CD8-positive, alpha-beta T cell (primary cell): ENCODE measurements at regions of chr7 and their contacts with region 1.

Region 1: DNA sequence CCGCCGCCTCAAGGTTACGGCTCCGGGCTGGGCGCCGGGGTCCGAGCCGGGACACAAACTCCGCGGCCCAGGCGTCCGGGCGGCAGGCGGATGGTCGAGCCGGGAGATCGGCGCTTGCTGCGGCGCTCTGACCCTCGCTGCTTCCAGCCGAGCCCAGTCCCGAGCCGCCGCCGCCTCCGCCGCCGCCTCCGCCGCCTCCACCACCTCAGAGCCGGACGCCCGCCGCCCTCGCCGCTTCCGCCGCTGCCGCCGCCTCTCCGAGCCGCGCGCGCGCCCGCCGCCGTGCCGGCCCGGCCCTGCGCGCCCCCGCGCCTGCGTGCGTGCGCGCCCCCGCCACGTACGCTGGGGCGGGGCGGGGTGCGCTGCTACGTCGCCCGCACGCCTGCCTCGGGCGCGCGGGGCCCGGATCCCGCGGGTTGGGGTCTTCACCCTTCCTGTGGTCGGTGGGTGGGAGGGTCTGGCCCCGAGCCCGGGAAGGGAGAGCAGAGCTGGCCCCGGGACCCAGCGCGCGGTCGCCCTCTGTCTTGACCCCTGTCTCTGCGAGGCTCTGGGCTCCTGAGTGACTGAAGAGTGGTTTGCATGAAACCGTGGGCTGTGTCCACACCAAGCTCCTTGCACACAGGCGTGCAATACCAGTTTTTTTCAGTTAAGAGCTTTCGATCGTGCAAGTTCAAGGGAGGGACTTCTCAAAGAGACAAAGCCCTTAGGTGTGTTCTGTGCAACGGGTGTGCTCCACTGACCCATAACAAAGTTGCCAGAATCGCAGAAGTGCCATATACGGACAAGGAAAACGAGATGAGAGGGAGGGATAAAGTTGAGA is at the start of gene SMURF1:
- DNase-seq: peak; percentile 41 to 89 (median 71)
- ATAC-seq: peak; percentile 37
- H3K4me3 ChIP-seq: peak within 1 kb of the TSS; percentile 66 to 85
- H3K4me3 Mint-ChIP-seq: peak within 1 kb of the TSS; percentile 93
- H3K27ac ChIP-seq: peak within 1 kb of the TSS; percentile 60 to 74
- H3K27ac Mint-ChIP-seq: peak within 1 kb of the TSS; percentile 89
- H3K4me1 ChIP-seq: peaks cover 33% of the 10 kb centered on the region
- H3K4me1 Mint-ChIP-seq: peaks cover 31% of the 10 kb centered on the region
- H3K27me3 ChIP-seq: no peaks in the 10 kb centered on the region
- H3K27me3 Mint-ChIP-seq: no peaks in the 10 kb centered on the region
- CTCF ChIP-seq: no peak
- total RNA-seq, gene SMURF1: 42.5 to 44.8 TPM

Region 2: DNA sequence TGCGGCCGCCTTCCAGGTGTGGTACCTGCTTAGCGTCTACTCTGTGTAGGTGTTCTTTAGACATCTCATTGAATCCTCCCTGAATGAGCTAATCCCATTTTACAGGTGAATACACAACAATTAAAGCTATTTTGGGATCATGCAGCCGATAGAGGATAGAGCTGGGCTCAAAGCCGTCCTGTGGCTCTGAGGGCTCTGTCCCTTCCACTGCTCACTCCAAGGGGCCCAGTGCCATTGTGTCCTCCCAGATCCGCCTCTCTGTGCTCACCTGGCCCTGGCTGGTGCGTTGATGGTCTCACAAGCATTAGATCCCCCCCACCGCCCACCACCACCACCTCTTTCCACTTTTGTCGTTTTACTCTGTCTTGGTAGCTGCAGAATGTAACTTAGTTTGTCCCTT is 513.9 kb before region 1 on chr7:
- CTCF ChIA-PET with region 1: no interaction called
- POLR2A ChIA-PET with region 1: no interaction called
- intact Hi-C with region 1: no loop called
- DNase-seq: no peak
- ATAC-seq: no peak
- H3K4me3 ChIP-seq: no peak overlapping the region
- H3K4me3 Mint-ChIP-seq: no peak overlapping the region
- H3K27ac ChIP-seq: no peak overlapping the region
- H3K27ac Mint-ChIP-seq: no peak overlapping the region
- H3K4me1 ChIP-seq: no peaks in the 10 kb centered on the region
- H3K4me1 Mint-ChIP-seq: peaks cover 2% of the 10 kb centered on the region
- H3K27me3 ChIP-seq: no peaks in the 10 kb centered on the region
- H3K27me3 Mint-ChIP-seq: peaks cover 11% of the 10 kb centered on the region
- CTCF ChIP-seq: no peak

Region 3: DNA sequence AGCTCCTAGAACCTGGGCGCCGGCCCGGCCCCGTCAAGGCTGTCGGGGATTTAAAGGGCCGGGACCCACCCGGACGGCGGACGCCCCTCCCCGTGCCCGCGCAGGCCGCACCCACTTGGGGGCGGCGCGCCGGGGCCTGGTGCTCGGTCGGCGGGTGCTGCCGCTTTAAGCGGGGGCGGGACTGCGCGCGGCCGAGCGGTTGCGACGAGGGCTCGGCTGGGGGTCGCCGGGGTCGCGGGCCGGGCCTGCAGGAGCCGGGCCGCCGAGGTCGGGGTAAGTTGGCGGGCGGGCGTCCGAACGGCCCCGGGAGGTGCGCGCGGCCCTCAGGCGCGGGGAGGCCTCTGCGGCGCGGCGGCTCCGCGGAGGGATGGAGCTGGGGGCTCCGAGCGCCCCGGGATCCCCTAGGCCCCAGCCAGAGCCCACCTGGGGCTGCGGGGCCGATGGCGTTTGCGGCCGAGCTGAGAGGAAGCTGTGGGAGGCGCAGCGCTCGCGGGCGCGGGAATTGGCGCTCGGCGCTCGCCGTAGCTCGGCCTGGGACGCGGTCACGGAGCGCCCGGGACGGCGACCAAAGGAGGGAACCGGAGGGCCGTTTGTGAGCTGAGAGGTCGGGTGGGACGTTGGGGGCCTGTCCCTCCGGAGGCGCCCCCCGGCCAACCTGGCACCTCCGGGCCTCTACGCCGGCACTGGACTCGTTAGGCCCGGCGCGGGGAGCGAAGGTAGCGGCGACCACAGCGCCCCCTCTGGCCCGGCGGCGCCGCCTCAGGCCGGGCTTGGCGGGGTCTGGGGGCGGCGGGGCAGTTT is 265.5 kb before region 1 on chr7 and contains the start of gene TRRAP:
- CTCF ChIA-PET with region 1: no interaction called
- POLR2A ChIA-PET with region 1: no interaction called
- intact Hi-C with region 1: loop called (anchors 2 kb)
- DNase-seq: peak; percentile 56 to 87 (median 73)
- ATAC-seq: peak; percentile 63
- H3K4me3 ChIP-seq: peak within 1 kb of the TSS; percentile 82 to 92
- H3K4me3 Mint-ChIP-seq: peak within 1 kb of the TSS; percentile 98
- H3K27ac ChIP-seq: peak within 1 kb of the TSS; percentile 77 to 82
- H3K27ac Mint-ChIP-seq: peak within 1 kb of the TSS; percentile 96
- H3K4me1 ChIP-seq: peaks cover 16% of the 10 kb centered on the region
- H3K4me1 Mint-ChIP-seq: peaks cover 24% of the 10 kb centered on the region
- H3K27me3 ChIP-seq: no peaks in the 10 kb centered on the region
- H3K27me3 Mint-ChIP-seq: peaks cover 2% of the 10 kb centered on the region
- CTCF ChIP-seq: peak; percentile 94
- total RNA-seq, gene TRRAP: 39.8 to 43.0 TPM

Region 4: GRCh38 chr7:98988641-98989040 is 155.4 kb before region 1 on chr7:
- CTCF ChIA-PET with region 1: no interaction called
- POLR2A ChIA-PET with region 1: no interaction called
- intact Hi-C with region 1: loop called in 1 of 2 experiments (anchors 5 kb)
- DNase-seq: no peak
- ATAC-seq: no peak
- H3K4me3 ChIP-seq: peak overlapping the region in 1 of 2 experiments; percentile 14
- H3K4me3 Mint-ChIP-seq: peak overlapping the region; percentile 40
- H3K27ac ChIP-seq: peak overlapping the region; percentile 30 to 43
- H3K27ac Mint-ChIP-seq: peak overlapping the region; percentile 91
- H3K4me1 ChIP-seq: peaks cover 26% of the 10 kb centered on the region
- H3K4me1 Mint-ChIP-seq: peaks cover 33% of the 10 kb centered on the region
- H3K27me3 ChIP-seq: no peaks in the 10 kb centered on the region
- H3K27me3 Mint-ChIP-seq: no peaks in the 10 kb centered on the region
- CTCF ChIP-seq: no peak

Region 5: GRCh38 chr7:99325545-99326407 is 181.7 kb after region 1 on chr7 and contains the start of gene ARPC1A:
- CTCF ChIA-PET with region 1: no interaction called
- POLR2A ChIA-PET with region 1: no interaction called
- intact Hi-C with region 1: loop called (anchors 1 to 2 kb)
- DNase-seq: peak; percentile 88 to 96 (median 92)
- ATAC-seq: peak; percentile 92
- H3K4me3 ChIP-seq: peak within 1 kb of the TSS; percentile 97 to 100
- H3K4me3 Mint-ChIP-seq: peak within 1 kb of the TSS; percentile 89
- H3K27ac ChIP-seq: peak within 1 kb of the TSS; percentile 79 to 87
- H3K27ac Mint-ChIP-seq: peak within 1 kb of the TSS; percentile 94
- H3K4me1 ChIP-seq: peaks cover 45% of the 10 kb centered on the region
- H3K4me1 Mint-ChIP-seq: peaks cover 43% of the 10 kb centered on the region
- H3K27me3 ChIP-seq: no peaks in the 10 kb centered on the region
- H3K27me3 Mint-ChIP-seq: no peaks in the 10 kb centered on the region
- CTCF ChIP-seq: no peak
- total RNA-seq, gene ARPC1A: 33.1 to 38.2 TPM

Region 6: GRCh38 chr7:99374103-99375064 is 230.3 kb after region 1 on chr7 and contains the start of gene ARPC1B:
- CTCF ChIA-PET with region 1: no interaction called
- POLR2A ChIA-PET with region 1: no interaction called
- intact Hi-C with region 1: loop called in 1 of 2 experiments (anchors 5 kb)
- DNase-seq: peak; percentile 69 to 94 (median 86)
- ATAC-seq: peak; percentile 55
- H3K4me3 ChIP-seq: peak within 1 kb of the TSS; percentile 70 to 90
- H3K4me3 Mint-ChIP-seq: peak within 1 kb of the TSS; percentile 84
- H3K27ac ChIP-seq: peak within 1 kb of the TSS; percentile 84 to 91
- H3K27ac Mint-ChIP-seq: peak within 1 kb of the TSS; percentile 96
- H3K4me1 ChIP-seq: peaks cover 55% of the 10 kb centered on the region
- H3K4me1 Mint-ChIP-seq: peaks cover 36% of the 10 kb centered on the region
- H3K27me3 ChIP-seq: no peaks in the 10 kb centered on the region
- H3K27me3 Mint-ChIP-seq: no peaks in the 10 kb centered on the region
- CTCF ChIP-seq: no peak
- total RNA-seq, gene ARPC1B: 68.5 to 70.5 TPM

Region 7: DNA sequence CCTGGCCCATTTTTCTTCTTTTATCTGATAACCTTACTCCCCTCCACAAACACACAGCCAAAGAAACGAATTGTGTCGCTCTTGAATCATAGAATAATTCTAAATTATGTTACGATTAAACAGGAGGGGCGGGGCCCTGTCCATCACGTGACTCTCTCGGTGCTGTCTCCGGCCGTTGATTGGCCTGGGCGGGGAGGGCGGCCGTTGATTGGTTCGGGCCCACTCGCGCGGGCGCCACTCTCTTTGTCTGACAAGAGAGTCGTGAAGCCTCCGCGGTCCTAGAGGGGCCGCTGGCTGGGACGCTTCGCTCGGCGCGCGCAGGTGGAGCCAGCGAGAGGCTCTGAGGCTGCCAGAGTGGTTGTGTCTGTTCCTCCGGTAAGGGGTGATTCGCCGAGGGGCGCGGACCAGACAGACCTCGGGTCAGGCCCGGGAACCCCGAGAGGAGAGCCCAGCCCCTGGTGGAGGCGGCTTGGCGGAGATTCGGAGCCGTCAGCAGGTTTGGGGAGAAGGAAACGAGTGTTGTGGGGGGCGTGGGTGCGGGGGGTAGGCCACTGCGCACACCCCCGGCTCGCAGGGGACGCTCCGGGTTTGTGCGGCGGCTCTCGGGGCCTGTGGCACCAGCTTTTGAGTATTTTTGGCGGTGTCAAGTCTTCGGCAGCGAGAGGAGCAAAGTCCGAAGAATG is 328.6 kb after region 1 on chr7 and contains the start of gene ZNF789:
- CTCF ChIA-PET with region 1: no interaction called
- POLR2A ChIA-PET with region 1: no interaction called
- intact Hi-C with region 1: loop called in 1 of 2 experiments (anchors 5 kb)
- DNase-seq: peak; percentile 96 to 99 (median 98)
- ATAC-seq: peak; percentile 97
- H3K4me3 ChIP-seq: peak within 1 kb of the TSS; percentile 75 to 93
- H3K4me3 Mint-ChIP-seq: peak within 1 kb of the TSS; percentile 98
- H3K27ac ChIP-seq: peak within 1 kb of the TSS; percentile 60 to 88
- H3K27ac Mint-ChIP-seq: peak within 1 kb of the TSS; percentile 96
- H3K4me1 ChIP-seq: peaks cover 19% of the 10 kb centered on the region
- H3K4me1 Mint-ChIP-seq: peaks cover 36% of the 10 kb centered on the region
- H3K27me3 ChIP-seq: no peaks in the 10 kb centered on the region
- H3K27me3 Mint-ChIP-seq: no peaks in the 10 kb centered on the region
- CTCF ChIP-seq: no peak
- total RNA-seq, gene ZNF789: 12.9 to 14.1 TPM